Activated naive CD4-positive, alpha-beta T cell treated with anti-CD3 and anti-CD28 coated beads for 36 hours (primary cell): ENCODE measurements at regions of chr7 and their contacts with region 1.

Region 1: DNA sequence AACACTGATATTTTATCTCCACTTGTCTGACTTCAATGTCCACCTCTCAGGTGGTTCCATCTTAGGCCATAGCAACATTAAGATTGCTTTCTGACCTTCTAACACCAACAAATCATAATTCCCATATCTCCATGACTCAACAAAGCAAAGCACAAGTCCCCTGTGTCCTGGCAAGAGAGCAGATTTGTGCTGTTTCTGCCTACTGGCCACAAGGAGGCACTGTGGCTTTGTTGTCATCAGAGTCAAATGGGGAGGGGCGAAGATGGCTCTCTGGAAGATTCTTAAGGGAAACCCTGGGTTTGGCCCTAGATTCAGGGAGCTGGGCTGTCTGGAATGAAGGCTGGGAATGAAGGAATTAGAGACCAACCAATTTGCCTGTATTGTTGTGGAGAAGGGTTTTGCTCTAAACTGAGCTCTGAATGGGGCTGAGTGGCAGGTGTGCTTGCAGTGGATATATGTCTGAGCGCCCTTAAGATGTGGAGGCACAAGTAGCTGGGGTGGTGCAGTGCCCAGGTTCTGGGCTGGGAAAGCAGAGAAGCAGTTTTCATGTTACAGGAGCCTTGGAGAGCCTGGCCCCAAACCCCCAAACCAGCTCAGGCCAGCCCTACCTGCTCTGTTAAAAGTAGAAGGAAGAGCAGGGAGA is 154.8 kb upstream of the PRSS58 start:
- DNase-seq: peak; percentile 67
- H3K4me3 Mint-ChIP-seq: no peak overlapping the region
- H3K27ac Mint-ChIP-seq: no peak overlapping the region
- H3K4me1 Mint-ChIP-seq: peaks cover 2% of the 10 kb centered on the region
- H3K27me3 Mint-ChIP-seq: no peaks in the 10 kb centered on the region

Region 2: DNA sequence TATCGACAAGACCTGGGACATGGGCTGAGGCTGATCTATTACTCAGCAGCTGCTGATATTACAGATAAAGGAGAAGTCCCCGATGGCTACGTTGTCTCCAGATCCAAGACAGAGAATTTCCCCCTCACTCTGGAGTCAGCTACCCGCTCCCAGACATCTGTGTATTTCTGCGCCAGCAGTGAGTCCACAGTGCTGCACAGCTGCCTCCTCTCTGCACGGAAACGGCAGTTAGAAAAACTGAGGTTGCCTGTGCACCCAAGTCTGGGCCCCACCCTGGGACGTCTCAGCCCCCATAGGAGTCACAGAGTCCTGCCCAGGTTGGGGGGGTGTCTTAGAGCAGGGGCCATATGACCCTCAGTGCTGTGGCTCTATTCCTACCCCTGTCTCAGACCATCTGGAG is 12.6 kb after region 1 on chr7:
- CTCF ChIA-PET with region 1: interaction called, 5 read pairs
- intact Hi-C with region 1: loop called (anchors 1 kb)
- DNase-seq: no peak
- H3K4me3 Mint-ChIP-seq: no peak overlapping the region
- H3K27ac Mint-ChIP-seq: no peak overlapping the region
- H3K4me1 Mint-ChIP-seq: peaks cover 19% of the 10 kb centered on the region
- H3K27me3 Mint-ChIP-seq: no peaks in the 10 kb centered on the region

Region 3: DNA sequence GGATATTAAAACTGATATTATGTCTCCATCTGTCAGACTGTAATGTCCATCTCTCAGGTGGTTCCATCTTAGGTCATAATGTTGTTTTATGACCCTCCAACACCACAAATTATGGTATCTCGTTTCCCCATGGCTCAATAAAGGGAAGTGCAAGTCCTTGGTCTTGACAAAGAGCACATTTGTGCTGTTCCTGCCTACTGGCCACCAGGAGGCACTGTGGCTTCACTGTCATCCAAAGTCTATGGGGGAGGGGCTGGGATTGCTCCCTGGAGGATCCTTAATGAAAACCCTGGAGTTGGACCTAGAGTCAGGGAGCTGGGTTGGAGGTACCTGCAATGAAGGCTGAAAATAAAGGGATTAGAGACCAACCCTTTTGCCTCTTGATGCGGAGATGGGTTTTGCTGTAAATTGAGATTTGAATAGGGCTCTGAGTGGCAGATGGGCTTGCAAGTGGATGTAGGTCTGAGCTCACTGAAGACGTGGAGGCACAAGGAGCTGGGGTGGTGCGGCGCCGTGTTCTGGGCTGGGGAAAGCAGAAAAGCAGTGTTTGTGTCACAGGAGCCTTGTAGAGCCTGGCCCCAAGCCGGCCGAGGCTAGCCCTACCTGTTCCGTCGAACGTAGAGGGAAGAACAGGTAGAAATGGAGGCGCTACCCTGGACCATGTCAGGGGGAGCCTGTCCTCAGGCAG is 25.7 kb after region 1 on chr7:
- CTCF ChIA-PET with region 1: interaction called, 12 read pairs
- intact Hi-C with region 1: no loop called
- DNase-seq: peak; percentile 47
- H3K4me3 Mint-ChIP-seq: no peak overlapping the region
- H3K27ac Mint-ChIP-seq: no peak overlapping the region
- H3K4me1 Mint-ChIP-seq: peaks cover 56% of the 10 kb centered on the region
- H3K27me3 Mint-ChIP-seq: no peaks in the 10 kb centered on the region

Region 4: GRCh38 chr7:142654398-142654797 is 241.7 kb after region 1 on chr7:
- CTCF ChIA-PET with region 1: no interaction called
- intact Hi-C with region 1: no loop called
- DNase-seq: no peak
- H3K4me3 Mint-ChIP-seq: no peak overlapping the region
- H3K27ac Mint-ChIP-seq: peak overlapping the region; percentile 5
- H3K4me1 Mint-ChIP-seq: peaks cover 11% of the 10 kb centered on the region
- H3K27me3 Mint-ChIP-seq: no peaks in the 10 kb centered on the region